Activated naive CD4-positive, alpha-beta T cell treated with anti-CD3 and anti-CD28 coated beads for 36 hours (primary cell): ENCODE measurements at regions of chr9 and their contacts with region 1.

Region 1: GRCh38 chr9:17159469-17159868 is 24.6 kb downstream of the CNTLN start:
- DNase-seq: no peak
- H3K4me3 Mint-ChIP-seq: no peak overlapping the region
- H3K27ac Mint-ChIP-seq: no peak overlapping the region
- H3K4me1 Mint-ChIP-seq: no peaks in the 10 kb centered on the region
- H3K27me3 Mint-ChIP-seq: no peaks in the 10 kb centered on the region

Region 2: DNA sequence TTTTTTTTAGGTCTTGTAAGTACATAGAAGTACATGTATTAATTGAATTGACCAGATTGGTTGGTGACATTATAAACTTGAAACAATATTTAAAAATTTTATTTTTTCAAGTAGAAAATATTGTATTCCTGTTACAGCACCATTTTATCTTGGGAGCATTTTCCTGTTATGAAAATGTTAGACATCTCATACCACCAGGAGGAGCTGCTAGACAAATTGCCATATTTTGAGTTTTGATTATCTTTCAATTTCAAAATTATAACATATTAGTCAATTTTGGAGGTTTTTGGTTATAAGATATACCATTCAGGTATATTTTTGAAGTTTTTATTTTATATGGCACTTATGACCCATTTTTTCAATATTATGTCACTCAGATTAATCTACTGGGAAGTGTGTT is 59.8 kb after region 1 on chr9:
- CTCF ChIA-PET with region 1: no interaction called
- intact Hi-C with region 1: loop called (anchors 10 kb)
- DNase-seq: no peak
- H3K4me3 Mint-ChIP-seq: no peak overlapping the region
- H3K27ac Mint-ChIP-seq: no peak overlapping the region
- H3K4me1 Mint-ChIP-seq: no peaks in the 10 kb centered on the region
- H3K27me3 Mint-ChIP-seq: no peaks in the 10 kb centered on the region